ENCODE measurements at regions of chr6 and their contacts with region 1.

Region 1: DNA sequence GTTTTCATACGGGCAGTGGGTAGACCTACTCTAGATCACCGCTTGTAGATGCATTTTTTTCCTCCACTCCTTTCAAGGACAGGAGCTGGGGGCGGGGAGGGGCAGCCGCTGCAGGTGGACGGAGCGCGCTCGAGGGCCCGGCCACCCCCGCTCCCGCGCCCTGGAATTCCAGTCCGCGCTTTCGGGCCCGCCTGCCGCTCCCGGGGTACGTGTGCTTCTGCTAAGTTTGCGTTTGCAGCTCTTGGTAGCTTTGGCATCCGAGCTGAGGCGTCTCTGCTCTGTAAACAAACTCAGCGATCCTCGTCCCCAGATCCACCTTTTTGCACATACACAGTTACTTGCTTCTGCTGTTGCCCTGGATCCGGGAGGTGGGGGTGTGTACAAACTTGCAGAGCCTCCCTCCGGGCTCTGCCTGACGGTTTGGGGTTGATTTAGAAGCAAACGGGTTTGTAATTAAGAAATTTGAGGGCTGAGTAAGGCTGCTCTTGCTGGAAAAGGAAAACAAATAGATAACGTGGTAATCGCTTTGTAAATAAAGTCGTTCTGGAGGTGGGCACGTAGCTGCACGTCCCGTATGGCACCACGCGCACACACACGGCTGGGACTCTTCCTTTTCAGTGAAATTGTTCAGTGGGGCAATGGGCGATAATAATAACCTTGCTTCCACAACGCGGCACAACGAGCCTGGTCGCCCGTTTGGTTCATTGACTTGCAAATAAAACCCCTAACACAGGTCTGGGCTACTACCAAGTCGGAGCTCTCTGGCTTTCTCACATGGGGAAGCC is 976 bp upstream of the CITED2 start:
- DNase-seq: peak; percentile 72 to 92 (median 80)
- ATAC-seq: peak; percentile 65
- H3K4me3 ChIP-seq: peak overlapping the region; percentile 71
- H3K4me3 Mint-ChIP-seq: peak overlapping the region; percentile 95
- H3K27ac ChIP-seq: peak overlapping the region; percentile 69 to 92
- H3K27ac Mint-ChIP-seq: peak overlapping the region; percentile 97
- H3K4me1 ChIP-seq: peaks cover 16% of the 10 kb centered on the region
- H3K4me1 Mint-ChIP-seq: peaks cover 28% of the 10 kb centered on the region
- H3K27me3 ChIP-seq: no peaks in the 10 kb centered on the region
- H3K27me3 Mint-ChIP-seq: no peaks in the 10 kb centered on the region
- CTCF ChIP-seq: no peak

Region 2: DNA sequence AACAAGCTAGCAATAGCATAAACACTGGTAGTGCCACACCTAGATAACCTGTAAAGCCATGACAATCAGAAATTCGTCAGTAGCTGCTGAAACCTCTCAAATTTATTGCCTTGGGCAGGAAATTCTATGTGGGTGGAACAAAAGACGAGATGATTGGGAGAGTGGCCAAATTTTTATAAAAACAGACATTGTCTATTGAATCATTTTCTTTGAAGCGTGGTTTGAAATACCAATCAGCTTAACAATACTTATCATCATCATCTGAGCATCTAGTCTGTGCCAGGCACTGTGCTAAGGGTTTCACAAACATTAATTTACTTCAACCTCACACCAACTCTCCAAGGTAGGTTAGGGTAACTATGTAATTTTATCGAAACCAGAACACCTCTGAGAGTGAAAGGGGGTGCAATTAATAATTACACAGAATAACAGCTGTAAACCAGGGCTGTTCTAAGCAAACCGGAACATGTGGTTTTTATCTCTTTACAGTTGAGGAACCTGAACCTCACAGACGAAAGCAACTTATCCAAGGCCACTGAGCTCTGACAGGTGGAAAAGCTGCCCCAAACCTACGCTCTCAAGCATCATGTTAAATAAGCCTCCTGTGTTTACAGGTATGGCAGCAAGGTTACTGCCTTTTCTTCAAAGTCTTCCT is 919.6 kb before region 1 on chr6:
- CTCF ChIA-PET with region 1: no interaction called
- POLR2A ChIA-PET with region 1: interaction called, 20 read pairs
- intact Hi-C with region 1: no loop called
- DNase-seq: peak in 10 of 14 experiments; percentile 2 to 84 (median 26)
- ATAC-seq: peak; percentile 74
- H3K4me3 ChIP-seq: peak overlapping the region; percentile 44
- H3K4me3 Mint-ChIP-seq: peak overlapping the region; percentile 82
- H3K27ac ChIP-seq: peak overlapping the region; percentile 43 to 58
- H3K27ac Mint-ChIP-seq: peak overlapping the region; percentile 97
- H3K4me1 ChIP-seq: peaks cover 18% of the 10 kb centered on the region
- H3K4me1 Mint-ChIP-seq: peaks cover 32% of the 10 kb centered on the region
- H3K27me3 ChIP-seq: no peaks in the 10 kb centered on the region
- H3K27me3 Mint-ChIP-seq: no peaks in the 10 kb centered on the region
- CTCF ChIP-seq: no peak

Region 3: DNA sequence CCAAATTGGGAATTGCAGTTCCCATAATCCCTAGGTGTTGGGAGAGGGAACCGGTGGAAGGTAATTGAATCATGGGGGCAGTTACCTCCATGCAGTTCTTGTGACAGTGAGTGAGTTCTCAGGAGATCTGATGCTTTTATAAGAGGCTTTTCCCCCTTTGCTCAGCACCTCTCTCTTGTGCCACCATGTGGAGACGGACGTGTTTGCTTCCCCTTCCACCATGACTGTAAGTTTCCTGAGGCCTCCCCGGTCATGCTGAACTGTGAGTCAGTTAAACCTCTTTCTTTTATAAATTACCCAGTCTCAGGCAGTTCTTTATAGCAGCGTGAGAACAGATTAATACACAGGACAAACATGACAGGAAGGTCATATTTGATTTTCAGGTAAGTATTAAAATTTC is 265.9 kb before region 1 on chr6:
- CTCF ChIA-PET with region 1: no interaction called
- POLR2A ChIA-PET with region 1: interaction called, 63 read pairs
- intact Hi-C with region 1: loop called in 1 of 2 experiments (anchors 5 kb)
- DNase-seq: peak in 6 of 14 experiments; percentile 14 to 62 (median 43)
- ATAC-seq: no peak
- H3K4me3 ChIP-seq: no peak overlapping the region
- H3K4me3 Mint-ChIP-seq: no peak overlapping the region
- H3K27ac ChIP-seq: no peak overlapping the region
- H3K27ac Mint-ChIP-seq: peak overlapping the region; percentile 83
- H3K4me1 ChIP-seq: peaks cover 36% of the 10 kb centered on the region
- H3K4me1 Mint-ChIP-seq: peaks cover 59% of the 10 kb centered on the region
- H3K27me3 ChIP-seq: no peaks in the 10 kb centered on the region
- H3K27me3 Mint-ChIP-seq: no peaks in the 10 kb centered on the region
- CTCF ChIP-seq: peak; percentile 26

Region 4: GRCh38 chr6:139146317-139146726 is 229.1 kb before region 1 on chr6:
- CTCF ChIA-PET with region 1: no interaction called
- POLR2A ChIA-PET with region 1: interaction called, 23 read pairs
- intact Hi-C with region 1: no loop called
- DNase-seq: peak in 1 of 14 experiments; percentile 38
- ATAC-seq: no peak
- H3K4me3 ChIP-seq: peak overlapping the region; percentile 29
- H3K4me3 Mint-ChIP-seq: peak overlapping the region; percentile 61
- H3K27ac ChIP-seq: peak overlapping the region in 1 of 2 donors; percentile 11
- H3K27ac Mint-ChIP-seq: peak overlapping the region; percentile 80
- H3K4me1 ChIP-seq: peaks cover 76% of the 10 kb centered on the region
- H3K4me1 Mint-ChIP-seq: peaks cover 95% of the 10 kb centered on the region
- H3K27me3 ChIP-seq: no peaks in the 10 kb centered on the region
- H3K27me3 Mint-ChIP-seq: no peaks in the 10 kb centered on the region
- CTCF ChIP-seq: no peak

Region 5: DNA sequence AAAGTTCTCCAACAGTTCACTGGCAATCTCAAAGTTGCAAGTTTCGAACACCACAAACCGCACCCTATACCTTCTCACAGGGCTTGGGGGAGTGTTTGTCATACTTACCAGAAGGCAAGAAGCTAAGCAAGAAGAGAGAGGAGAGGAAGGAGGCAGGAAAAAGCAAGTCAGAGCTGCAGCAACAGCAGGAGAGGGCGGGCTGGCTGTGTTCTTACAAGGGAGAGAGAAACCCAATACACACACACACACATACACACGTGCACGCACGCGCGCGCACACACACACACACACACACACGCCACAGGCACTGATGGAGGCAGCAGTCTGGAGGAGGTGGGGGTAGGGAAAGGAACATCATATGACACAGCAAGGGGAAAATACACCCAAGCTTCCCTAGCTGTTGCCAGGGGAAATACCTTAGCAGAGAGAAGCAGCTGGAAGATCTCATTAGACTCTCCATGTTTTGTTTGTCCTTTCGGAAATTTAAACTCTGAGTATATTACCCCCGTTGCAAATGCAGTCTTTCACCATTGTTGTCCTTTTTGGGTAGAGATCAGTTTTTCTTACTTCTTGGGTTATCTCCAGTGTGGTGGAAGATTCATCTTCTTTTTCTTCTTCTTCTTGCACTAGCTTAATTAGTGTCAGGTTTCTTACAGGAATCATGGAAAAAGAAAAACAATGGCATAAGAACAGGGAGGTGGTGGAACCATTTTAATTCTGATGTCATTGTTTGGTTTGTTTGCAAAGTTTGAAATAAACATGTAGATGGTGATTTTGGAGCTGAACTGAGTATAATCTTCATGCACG is 83.4 kb before region 1 on chr6 and contains the start of gene TXLNB:
- CTCF ChIA-PET with region 1: interaction called, 5 read pairs
- POLR2A ChIA-PET with region 1: interaction called, 83 read pairs
- intact Hi-C with region 1: loop called in 1 of 2 experiments (anchors 2 kb)
- DNase-seq: peak; percentile 66 to 93 (median 78)
- ATAC-seq: peak; percentile 94
- H3K4me3 ChIP-seq: peak within 1 kb of the TSS; percentile 34
- H3K4me3 Mint-ChIP-seq: peak within 1 kb of the TSS; percentile 83
- H3K27ac ChIP-seq: peak within 1 kb of the TSS; percentile 68 to 80
- H3K27ac Mint-ChIP-seq: peak within 1 kb of the TSS; percentile 84
- H3K4me1 ChIP-seq: peaks cover 47% of the 10 kb centered on the region
- H3K4me1 Mint-ChIP-seq: peaks cover 62% of the 10 kb centered on the region
- H3K27me3 ChIP-seq: no peaks in the 10 kb centered on the region
- H3K27me3 Mint-ChIP-seq: no peaks in the 10 kb centered on the region
- CTCF ChIP-seq: no peak
- total RNA-seq, gene TXLNB: 0.17 to 0.19 TPM

Region 6: GRCh38 chr6:139335447-139336210 is 39.8 kb before region 1 on chr6:
- CTCF ChIA-PET with region 1: no interaction called
- POLR2A ChIA-PET with region 1: no interaction called
- intact Hi-C with region 1: no loop called
- DNase-seq: no peak
- ATAC-seq: no peak
- H3K4me3 ChIP-seq: no peak overlapping the region
- H3K4me3 Mint-ChIP-seq: no peak overlapping the region
- H3K27ac ChIP-seq: no peak overlapping the region
- H3K27ac Mint-ChIP-seq: no peak overlapping the region
- H3K4me1 ChIP-seq: peaks cover 3% of the 10 kb centered on the region
- H3K4me1 Mint-ChIP-seq: no peaks in the 10 kb centered on the region
- H3K27me3 ChIP-seq: no peaks in the 10 kb centered on the region
- H3K27me3 Mint-ChIP-seq: no peaks in the 10 kb centered on the region
- CTCF ChIP-seq: no peak

Region 7: GRCh38 chr6:139457476-139457875 is 82.1 kb after region 1 on chr6:
- CTCF ChIA-PET with region 1: no interaction called
- POLR2A ChIA-PET with region 1: no interaction called
- intact Hi-C with region 1: no loop called
- DNase-seq: no peak
- ATAC-seq: no peak
- H3K4me3 ChIP-seq: no peak overlapping the region
- H3K4me3 Mint-ChIP-seq: no peak overlapping the region
- H3K27ac ChIP-seq: no peak overlapping the region
- H3K27ac Mint-ChIP-seq: no peak overlapping the region
- H3K4me1 ChIP-seq: no peaks in the 10 kb centered on the region
- H3K4me1 Mint-ChIP-seq: no peaks in the 10 kb centered on the region
- H3K27me3 ChIP-seq: no peaks in the 10 kb centered on the region
- H3K27me3 Mint-ChIP-seq: no peaks in the 10 kb centered on the region
- CTCF ChIP-seq: no peak

Region 8: GRCh38 chr6:139474145-139475108 is 99.0 kb after region 1 on chr6:
- CTCF ChIA-PET with region 1: no interaction called
- POLR2A ChIA-PET with region 1: interaction called, 11 read pairs
- intact Hi-C with region 1: no loop called
- DNase-seq: peak in 1 of 14 experiments; percentile 7
- ATAC-seq: no peak
- H3K4me3 ChIP-seq: no peak overlapping the region
- H3K4me3 Mint-ChIP-seq: no peak overlapping the region
- H3K27ac ChIP-seq: no peak overlapping the region
- H3K27ac Mint-ChIP-seq: no peak overlapping the region
- H3K4me1 ChIP-seq: peaks cover 4% of the 10 kb centered on the region
- H3K4me1 Mint-ChIP-seq: no peaks in the 10 kb centered on the region
- H3K27me3 ChIP-seq: no peaks in the 10 kb centered on the region
- H3K27me3 Mint-ChIP-seq: no peaks in the 10 kb centered on the region
- CTCF ChIP-seq: no peak

Region 9: DNA sequence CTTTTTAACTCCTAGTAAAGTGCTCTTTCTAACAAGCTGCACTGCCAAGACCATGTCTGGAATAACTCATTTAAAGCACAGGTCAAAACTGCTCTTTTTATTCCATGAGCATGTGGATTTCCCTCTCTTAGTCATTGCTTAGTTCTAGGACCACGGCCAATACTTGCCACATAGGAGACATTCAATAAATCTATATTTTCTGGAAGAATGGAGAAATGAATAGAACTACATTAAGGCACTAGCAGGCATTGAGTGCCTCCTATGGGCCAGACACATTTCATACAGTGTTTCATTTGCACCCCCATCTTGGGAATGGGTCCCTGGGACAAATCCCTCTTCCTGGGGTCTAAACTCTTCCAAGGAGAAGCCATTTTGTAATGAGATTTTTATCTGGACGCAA is 551.8 kb after region 1 on chr6:
- CTCF ChIA-PET with region 1: no interaction called
- POLR2A ChIA-PET with region 1: no interaction called
- intact Hi-C with region 1: loop called in 1 of 2 experiments (anchors 5 kb)
- DNase-seq: peak in 1 of 14 experiments; percentile 13
- ATAC-seq: no peak
- H3K4me3 ChIP-seq: no peak overlapping the region
- H3K4me3 Mint-ChIP-seq: no peak overlapping the region
- H3K27ac ChIP-seq: no peak overlapping the region
- H3K27ac Mint-ChIP-seq: no peak overlapping the region
- H3K4me1 ChIP-seq: no peaks in the 10 kb centered on the region
- H3K4me1 Mint-ChIP-seq: no peaks in the 10 kb centered on the region
- H3K27me3 ChIP-seq: peaks cover 0 to 10% of the 10 kb centered on the region in 2 experiments
- H3K27me3 Mint-ChIP-seq: peaks cover 20% of the 10 kb centered on the region
- CTCF ChIP-seq: no peak

Region 10: DNA sequence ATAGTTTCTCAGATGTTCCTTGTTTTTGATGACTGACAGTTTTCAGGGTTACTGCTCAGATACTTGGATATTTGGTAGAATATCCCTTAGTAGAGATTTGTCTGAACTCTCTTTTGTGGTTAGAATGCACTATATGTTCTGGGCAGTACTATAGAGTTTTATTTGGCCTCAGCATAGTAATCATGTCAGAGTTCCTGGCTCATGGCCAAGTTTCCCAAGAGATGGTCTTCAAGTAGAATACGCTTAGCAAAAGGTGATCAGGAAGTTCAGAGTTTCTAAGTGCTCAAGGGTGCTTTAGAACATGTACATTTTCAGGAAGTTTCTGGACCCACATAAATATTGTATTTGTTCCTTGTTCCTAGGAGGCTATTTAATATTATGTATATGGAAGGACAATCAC is 1547.6 kb after region 1 on chr6:
- CTCF ChIA-PET with region 1: no interaction called
- POLR2A ChIA-PET with region 1: no interaction called
- intact Hi-C with region 1: no loop called
- DNase-seq: no peak
- ATAC-seq: no peak
- H3K4me3 ChIP-seq: no peak overlapping the region
- H3K4me3 Mint-ChIP-seq: no peak overlapping the region
- H3K27ac ChIP-seq: no peak overlapping the region
- H3K27ac Mint-ChIP-seq: no peak overlapping the region
- H3K4me1 ChIP-seq: no peaks in the 10 kb centered on the region
- H3K4me1 Mint-ChIP-seq: no peaks in the 10 kb centered on the region
- H3K27me3 ChIP-seq: no peaks in the 10 kb centered on the region
- H3K27me3 Mint-ChIP-seq: peaks cover 7% of the 10 kb centered on the region
- CTCF ChIP-seq: no peak

Measured in CD4-positive, alpha-beta T cell (primary cell).